ENCODE measurements at regions of chr2 and their contacts with region 1.

Region 1: GRCh38 chr2:191218292-191218898 is 26.8 kb upstream of the MYO1B start:
- DNase-seq: no peak
- H3K4me3 ChIP-seq: no peak overlapping the region
- H3K27me3 ChIP-seq: no peaks in the 10 kb centered on the region
- CTCF ChIP-seq: peak; percentile 50

Region 2: GRCh38 chr2:190043441-190043840 is 1175.0 kb before region 1 on chr2:
- CTCF ChIA-PET with region 1: no interaction called
- POLR2A ChIA-PET with region 1: no interaction called
- DNase-seq: no peak
- H3K4me3 ChIP-seq: no peak overlapping the region
- H3K27me3 ChIP-seq: no peaks in the 10 kb centered on the region
- CTCF ChIP-seq: no peak

Region 3: DNA sequence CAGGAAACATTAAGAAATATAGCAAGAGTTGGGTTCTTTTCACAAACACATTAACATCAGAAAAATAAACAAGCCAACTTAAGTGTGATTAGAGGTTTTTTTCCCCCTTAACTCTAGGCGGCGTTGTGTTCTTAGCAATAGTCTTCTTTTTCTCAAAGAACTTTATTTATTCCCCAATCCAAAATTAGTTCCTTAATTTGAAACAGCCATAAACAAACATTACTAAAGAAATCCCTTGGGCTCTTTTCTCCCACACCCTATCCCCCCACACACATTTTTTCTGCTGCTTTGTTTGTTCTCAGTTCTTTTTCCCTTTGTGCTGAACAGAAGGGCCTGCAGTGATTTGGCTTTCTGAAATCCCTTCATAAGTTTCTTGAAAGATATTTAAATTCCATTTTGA is 13.6 kb after region 1 on chr2:
- CTCF ChIA-PET with region 1: interaction called, 13 read pairs
- POLR2A ChIA-PET with region 1: no interaction called
- DNase-seq: no peak
- H3K4me3 ChIP-seq: no peak overlapping the region
- H3K27me3 ChIP-seq: no peaks in the 10 kb centered on the region
- CTCF ChIP-seq: peak; percentile 69

Region 4: DNA sequence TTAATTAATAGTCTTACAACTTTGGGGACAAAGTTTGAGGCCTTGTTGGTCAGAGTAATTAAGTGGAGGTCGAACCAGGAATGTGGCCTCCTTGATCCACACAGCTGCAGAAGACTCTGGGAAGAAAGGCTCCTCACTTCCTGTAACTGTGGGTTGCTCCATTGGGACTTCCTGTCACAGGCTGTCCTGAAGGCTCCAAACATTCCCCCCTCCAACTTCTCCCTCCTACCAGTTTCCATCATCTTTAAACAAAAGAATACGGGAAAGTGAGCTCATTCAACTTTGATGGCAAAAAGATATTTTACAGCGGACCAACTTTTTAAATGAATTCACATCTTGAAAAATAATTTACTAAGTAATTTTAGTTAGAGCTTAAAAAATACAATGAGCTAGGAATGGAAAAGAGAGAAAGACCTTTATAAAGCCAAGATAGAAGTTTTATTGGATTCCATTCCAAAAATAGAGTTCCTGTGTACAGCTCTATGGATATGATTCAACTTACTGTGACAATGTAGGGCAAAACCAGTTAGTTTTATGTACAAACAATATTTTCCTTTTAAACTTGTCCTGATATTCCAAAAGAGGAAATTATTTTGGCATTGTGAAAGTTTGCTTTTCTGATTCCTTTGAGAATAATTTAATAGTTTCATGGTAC is 247.5 kb after region 1 on chr2:
- CTCF ChIA-PET with region 1: no interaction called
- POLR2A ChIA-PET with region 1: no interaction called
- DNase-seq: peak; percentile 30
- H3K4me3 ChIP-seq: no peak overlapping the region
- H3K27me3 ChIP-seq: no peaks in the 10 kb centered on the region
- CTCF ChIP-seq: no peak

Region 5: GRCh38 chr2:191539068-191539467 is 320.7 kb after region 1 on chr2:
- CTCF ChIA-PET with region 1: no interaction called
- POLR2A ChIA-PET with region 1: interaction called, 18 read pairs
- DNase-seq: no peak
- H3K4me3 ChIP-seq: no peak overlapping the region
- H3K27me3 ChIP-seq: peaks cover 1% of the 10 kb centered on the region
- CTCF ChIP-seq: peak; percentile 68